BJ (cell line): ENCODE measurements at regions of chr3 and their contacts with region 1.

Region 1: DNA sequence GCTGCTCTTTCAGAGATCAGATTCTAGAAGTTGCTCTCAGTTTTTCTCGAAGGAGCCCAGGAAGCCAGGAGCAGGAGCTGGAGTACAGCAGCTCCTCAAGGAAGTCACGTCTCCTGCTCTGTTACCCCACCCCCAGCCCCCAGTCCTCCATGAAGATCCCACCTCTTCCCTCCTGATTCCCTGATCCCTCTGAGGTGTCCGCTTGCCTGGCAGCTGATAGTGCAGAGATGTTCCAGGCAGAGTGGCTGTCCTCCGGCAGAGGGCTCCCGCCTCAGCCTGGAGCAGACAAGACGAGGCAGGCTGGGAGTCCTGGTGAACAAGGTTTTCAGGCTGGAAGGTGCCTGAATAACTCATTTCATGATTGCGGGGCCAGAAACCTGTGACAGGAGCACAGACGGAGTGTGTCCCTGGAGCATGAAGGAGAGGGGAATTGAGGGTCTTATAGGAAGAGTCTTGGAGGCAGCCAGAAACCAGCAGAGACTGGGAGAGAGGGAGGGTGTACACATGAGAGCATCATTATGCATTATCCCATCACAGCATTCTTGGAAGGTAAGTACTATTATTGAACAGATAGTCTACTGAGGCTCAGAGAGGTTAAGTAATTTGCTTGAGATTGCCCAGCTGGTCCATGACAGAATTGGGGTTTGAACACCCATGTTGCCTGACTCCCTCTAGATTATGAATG is 1.2 kb downstream of the HRH1 start:
- DNase-seq: peak; percentile 36
- H3K4me3 ChIP-seq: peak overlapping the region; percentile 77
- H3K27me3 ChIP-seq: no peaks in the 10 kb centered on the region
- CTCF ChIP-seq: peak; percentile 95

Region 2: GRCh38 chr3:9852549-9852948 is 1302.9 kb before region 1 on chr3:
- CTCF ChIA-PET with region 1: no interaction called
- POLR2A ChIA-PET with region 1: no interaction called
- DNase-seq: no peak
- H3K4me3 ChIP-seq: no peak overlapping the region
- H3K27me3 ChIP-seq: peaks cover 5% of the 10 kb centered on the region; the same call in 1 of the 2 replicates
- CTCF ChIP-seq: no peak

Region 3: DNA sequence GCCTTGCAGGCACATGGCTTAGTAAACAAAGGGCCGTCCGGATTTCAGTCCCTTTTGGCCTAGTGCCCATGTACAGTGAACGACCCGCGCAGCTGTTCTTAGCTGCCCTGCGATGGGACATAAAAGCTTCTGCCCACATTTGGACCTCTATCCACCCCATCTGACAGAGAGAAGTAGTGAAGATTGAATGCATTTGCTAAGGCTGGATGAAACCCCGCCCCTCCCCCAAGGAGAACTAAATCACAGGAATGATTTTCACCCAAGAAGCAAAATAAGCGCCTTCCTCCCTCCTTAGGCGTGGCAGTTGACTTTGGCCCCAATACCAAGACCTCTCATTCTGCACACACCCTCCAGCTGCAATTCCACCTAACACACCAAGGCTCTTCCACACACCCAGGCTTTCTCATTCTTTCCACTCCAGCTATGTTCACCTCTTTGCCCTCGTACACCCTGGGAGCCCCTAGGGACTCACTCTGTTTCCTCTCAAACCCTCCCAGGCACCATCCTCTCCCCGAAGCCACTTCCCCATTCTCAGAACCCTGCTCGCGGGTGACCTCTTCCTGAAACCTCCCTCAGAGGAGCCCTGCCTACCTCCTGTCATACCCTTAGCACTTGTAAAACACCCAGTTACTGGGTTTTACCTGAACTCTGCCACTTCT is 15.3 kb before region 1 on chr3:
- CTCF ChIA-PET with region 1: interaction called, 14 read pairs
- POLR2A ChIA-PET with region 1: no interaction called
- DNase-seq: no peak
- H3K4me3 ChIP-seq: no peak overlapping the region
- H3K27me3 ChIP-seq: no peaks in the 10 kb centered on the region
- CTCF ChIP-seq: no peak

Region 4: GRCh38 chr3:11195721-11196332 is 40.3 kb after region 1 on chr3:
- CTCF ChIA-PET with region 1: interaction called, 15 read pairs
- POLR2A ChIA-PET with region 1: no interaction called
- DNase-seq: no peak
- H3K4me3 ChIP-seq: no peak overlapping the region
- H3K27me3 ChIP-seq: no peaks in the 10 kb centered on the region
- CTCF ChIP-seq: no peak

Region 5: DNA sequence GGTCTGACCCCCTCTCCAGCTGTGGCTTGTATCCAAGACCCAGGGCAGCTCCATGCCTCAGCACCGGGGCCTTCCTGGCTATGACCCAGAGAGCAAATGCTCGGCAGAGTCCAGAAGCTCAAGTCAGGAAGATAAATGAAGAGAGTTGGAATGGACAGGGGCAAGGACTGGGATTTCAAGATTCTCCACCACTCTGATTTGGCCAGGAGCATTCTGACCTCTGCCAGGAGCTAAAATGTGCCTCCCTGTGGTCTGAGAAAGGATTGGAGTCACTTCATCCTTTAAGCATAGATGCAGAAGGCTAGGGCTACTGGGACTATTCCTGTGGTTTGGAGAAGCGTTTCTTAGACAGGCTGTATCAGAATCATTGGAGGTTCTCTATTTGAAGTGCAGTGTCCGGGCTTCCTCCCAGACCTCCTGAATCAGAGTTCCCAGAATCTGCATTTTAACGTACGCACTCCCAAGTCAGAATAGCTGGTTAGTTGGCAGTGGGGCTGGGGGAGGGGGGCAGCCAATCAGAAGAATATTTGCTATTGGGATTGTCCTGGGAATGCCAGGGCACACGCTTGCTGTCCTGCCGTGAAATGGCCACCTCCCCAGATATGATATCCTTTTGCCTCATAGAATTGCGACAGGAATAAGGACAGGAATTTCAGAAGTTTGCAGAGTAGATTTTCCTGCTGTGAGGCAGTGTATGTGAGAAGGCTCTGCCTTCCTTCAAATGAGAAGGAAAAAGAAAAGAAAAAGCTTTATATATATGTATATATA is 56.2 kb after region 1 on chr3:
- CTCF ChIA-PET with region 1: interaction called, 29 read pairs
- POLR2A ChIA-PET with region 1: interaction called, 3 read pairs
- DNase-seq: no peak
- H3K4me3 ChIP-seq: no peak overlapping the region
- H3K27me3 ChIP-seq: no peaks in the 10 kb centered on the region
- CTCF ChIP-seq: peak; percentile 17; the same call in 1 of the 2 replicates

Region 6: DNA sequence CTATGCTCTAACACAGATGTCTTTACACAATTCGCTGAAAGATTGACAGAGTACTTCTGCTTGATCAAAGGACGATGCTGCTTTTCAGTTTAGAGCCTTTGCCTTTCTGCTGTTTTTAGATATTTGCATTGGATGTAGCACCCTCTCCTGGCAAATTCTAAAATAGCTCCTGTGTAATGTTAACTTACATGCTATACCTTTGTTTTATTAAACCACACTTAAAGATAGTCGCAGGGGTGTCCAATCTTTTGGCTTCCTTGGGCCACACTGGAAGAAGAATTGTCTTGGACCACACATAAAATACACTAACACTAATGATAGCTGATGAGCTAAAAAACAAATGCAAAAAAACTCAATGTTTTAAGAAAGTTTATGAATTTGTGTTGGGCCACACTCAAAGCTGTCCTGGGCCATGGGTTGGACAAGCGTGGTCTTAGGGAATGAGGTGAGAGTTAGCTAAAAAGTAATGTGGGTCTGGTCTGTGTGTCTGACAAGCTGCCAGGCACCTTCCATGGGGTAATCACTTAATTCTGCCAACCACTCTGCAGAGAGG is 179.6 kb after region 1 on chr3:
- CTCF ChIA-PET with region 1: interaction called, 63 read pairs
- POLR2A ChIA-PET with region 1: no interaction called
- DNase-seq: no peak
- H3K4me3 ChIP-seq: no peak overlapping the region
- H3K27me3 ChIP-seq: no peaks in the 10 kb centered on the region
- CTCF ChIP-seq: peak; percentile 66